Gastrocnemius medialis (tissue), 4 donors: ENCODE measurements at regions of chr2 and their contacts with region 1.

Region 1: DNA sequence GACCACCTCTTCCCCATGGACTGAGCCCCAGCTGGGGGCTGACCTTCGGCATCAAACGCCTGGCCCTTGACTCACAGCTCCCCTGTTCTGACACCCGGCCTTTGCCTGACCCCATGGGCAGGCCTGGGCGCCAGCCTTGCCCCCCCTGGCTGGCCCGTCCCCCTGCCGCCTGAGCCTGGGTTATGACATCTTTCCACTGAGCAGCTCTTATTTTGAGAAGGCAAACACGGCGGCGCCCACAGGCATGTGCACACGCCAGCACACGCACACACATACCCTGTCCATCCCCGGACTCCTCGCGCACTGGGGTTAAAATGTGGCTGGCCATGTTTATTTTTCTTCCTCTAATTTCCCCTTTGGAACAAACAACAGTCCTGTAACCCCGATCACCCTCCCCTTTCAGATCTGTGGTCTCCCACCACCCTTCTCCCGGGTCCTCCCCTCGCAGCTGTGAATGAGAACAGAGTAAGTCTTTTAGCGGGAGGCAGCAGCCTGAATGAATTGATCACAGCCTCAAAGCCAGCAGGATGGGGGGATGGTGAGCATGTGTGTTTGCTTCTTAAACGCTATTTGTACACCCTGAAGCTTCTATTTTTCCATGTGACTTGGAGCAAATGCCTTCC is 11.8 kb upstream of the ATOH8 start:
- DNase-seq: peak; percentile 77 to 93
- ATAC-seq: peak; percentile 34 to 37
- H3K4me3 ChIP-seq: peak overlapping the region; percentile 4 to 30 (median 24)
- H3K27ac ChIP-seq: peak overlapping the region; percentile 94 to 98 (median 97)
- H3K4me1 ChIP-seq: peaks cover 77 to 82% of the 10 kb centered on the region in 2 donors
- H3K27me3 ChIP-seq: no peaks in the 10 kb centered on the region
- CTCF ChIP-seq: no peak
- POLR2A ChIP-seq: peak; percentile 29 to 31

Region 2: GRCh38 chr2:85678794-85679672 is 62.9 kb before region 1 on chr2:
- in situ Hi-C with region 1: no loop called
- intact Hi-C with region 1: loop called (anchors 2 kb)
- DNase-seq: peak; percentile 86 to 94
- ATAC-seq: peak; percentile 38 to 50
- H3K4me3 ChIP-seq: no peak overlapping the region
- H3K27ac ChIP-seq: peak overlapping the region; percentile 87 to 93 (median 90)
- H3K4me1 ChIP-seq: peaks cover 45 to 57% of the 10 kb centered on the region in 2 donors
- H3K27me3 ChIP-seq: no peaks in the 10 kb centered on the region
- CTCF ChIP-seq: peak; percentile 98 to 100 (median 99)
- POLR2A ChIP-seq: no peak

Region 3: GRCh38 chr2:85712849-85713602 is 28.9 kb before region 1 on chr2:
- in situ Hi-C with region 1: no loop called
- intact Hi-C with region 1: loop called (anchors 1 kb)
- DNase-seq: peak; percentile 90 to 95
- ATAC-seq: peak; percentile 57 to 73
- H3K4me3 ChIP-seq: no peak overlapping the region
- H3K27ac ChIP-seq: peak overlapping the region; percentile 92 to 97 (median 95)
- H3K4me1 ChIP-seq: peaks cover 40 to 65% of the 10 kb centered on the region in 2 donors
- H3K27me3 ChIP-seq: no peaks in the 10 kb centered on the region
- CTCF ChIP-seq: no peak
- POLR2A ChIP-seq: peak; percentile 60 to 70

Region 4: GRCh38 chr2:85797921-85798320 is 56.0 kb after region 1 on chr2:
- in situ Hi-C with region 1: loop called in 1 of 4 experiments (anchors 10 kb)
- intact Hi-C with region 1: no loop called
- DNase-seq: no peak
- ATAC-seq: peak in 1 of 2 donors; percentile 53
- H3K4me3 ChIP-seq: no peak overlapping the region
- H3K27ac ChIP-seq: peak overlapping the region in 2 of 4 donors; percentile 53 to 59
- H3K4me1 ChIP-seq: peaks cover 60 to 63% of the 10 kb centered on the region in 2 donors
- H3K27me3 ChIP-seq: no peaks in the 10 kb centered on the region
- CTCF ChIP-seq: peak in 4 of 5 experiments; percentile 29 to 68 (median 40)
- POLR2A ChIP-seq: no peak

Region 5: DNA sequence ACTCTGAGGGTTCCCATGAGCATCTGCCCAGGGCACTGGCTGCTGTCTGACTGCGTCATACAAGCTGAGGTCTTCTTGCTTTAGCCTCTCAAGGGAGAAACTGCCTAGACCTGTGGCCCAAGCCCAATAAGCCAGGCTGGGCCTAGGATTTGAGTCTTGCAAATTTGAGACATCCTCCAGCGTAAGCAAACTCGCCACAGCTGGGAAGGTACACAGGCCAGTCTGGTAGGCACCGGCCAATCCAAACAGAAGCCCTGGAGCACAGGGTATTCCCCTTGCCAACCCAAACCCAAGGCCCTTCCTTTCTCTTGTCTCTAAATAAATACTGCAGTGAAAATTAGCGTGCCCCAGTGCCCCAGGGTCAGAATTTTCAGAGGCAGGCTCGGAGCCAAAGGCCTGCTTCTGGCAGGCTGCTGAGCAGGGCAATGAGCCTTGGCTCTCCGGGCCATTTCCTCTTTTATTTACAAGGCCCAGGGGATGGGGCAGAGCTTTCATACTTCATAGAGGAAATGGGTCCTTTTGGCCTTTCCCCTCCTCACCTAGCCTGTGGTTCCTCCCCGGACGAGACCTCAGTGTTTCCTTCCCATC is 330.4 kb after region 1 on chr2:
- in situ Hi-C with region 1: no loop called
- intact Hi-C with region 1: loop called (anchors 5 kb)
- DNase-seq: peak in 1 of 2 donors; percentile 83
- ATAC-seq: peak; percentile 13 to 66
- H3K4me3 ChIP-seq: no peak overlapping the region
- H3K27ac ChIP-seq: peak overlapping the region; percentile 81 to 91 (median 87)
- H3K4me1 ChIP-seq: peaks cover 33 to 45% of the 10 kb centered on the region in 2 donors
- H3K27me3 ChIP-seq: no peaks in the 10 kb centered on the region
- CTCF ChIP-seq: no peak
- POLR2A ChIP-seq: peak; percentile 33 to 43